Posterior cingulate gyrus (tissue), 11 donors: ENCODE measurements at regions of chr7 and their contacts with region 1.

Region 1: DNA sequence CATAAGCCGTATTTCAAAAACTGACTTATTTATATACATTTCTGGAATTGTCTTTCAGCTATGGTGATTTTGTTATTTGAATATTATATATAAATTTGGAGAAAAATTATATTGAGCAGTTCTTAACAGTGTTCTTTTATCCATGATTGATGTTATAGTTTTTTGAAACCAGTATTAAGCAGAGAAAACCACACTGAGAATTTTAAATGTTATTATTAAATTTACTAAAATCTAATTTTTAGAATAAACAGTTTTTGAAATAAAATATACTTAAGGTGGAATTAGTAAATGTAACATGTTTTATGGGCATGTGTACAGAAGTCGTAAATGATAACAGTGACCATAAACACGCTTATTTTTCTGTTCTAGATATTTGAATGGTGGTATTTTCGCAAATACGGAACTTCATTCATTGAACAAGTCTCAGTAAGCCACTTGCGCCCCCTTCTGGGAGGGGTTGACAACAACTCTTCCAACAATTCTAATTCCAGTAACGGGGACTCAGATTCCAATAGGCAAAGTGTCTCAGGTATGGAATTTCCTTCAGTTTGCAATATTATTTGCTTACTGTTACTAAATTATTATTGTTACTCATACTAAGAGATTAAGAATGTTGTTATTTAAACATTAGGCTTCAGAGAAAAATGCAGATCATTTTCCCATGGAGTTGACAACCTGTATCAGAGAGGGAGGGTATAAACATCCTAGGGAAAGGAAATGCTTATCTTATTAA is 166.1 kb downstream of the ST7 start:
- DNase-seq: peak in 9 of 10 donors; percentile 26 to 94 (median 76)

Region 2: GRCh38 chr7:116461500-116461899 is 657.9 kb before region 1 on chr7:
- intact Hi-C with region 1: no loop called
- DNase-seq: no peak

Region 3: DNA sequence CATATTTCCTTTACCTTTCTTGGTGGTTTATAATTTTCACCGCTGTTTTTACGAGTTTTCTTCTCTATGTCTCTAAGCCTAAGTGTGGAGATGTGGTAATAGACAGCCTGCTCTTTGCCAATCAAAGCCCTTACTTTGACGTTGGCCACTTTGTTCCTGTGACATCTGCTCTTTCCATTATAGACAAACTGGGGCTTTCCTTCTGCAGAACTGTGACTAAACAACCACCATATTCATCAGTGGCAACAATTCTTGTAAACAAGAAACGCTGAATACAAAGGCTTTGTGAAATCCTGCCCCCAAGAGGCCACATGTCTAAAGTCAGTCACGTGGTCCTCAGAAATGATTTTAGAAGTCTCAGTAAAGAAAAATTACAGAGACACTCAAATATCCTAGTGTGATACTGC is 316.6 kb before region 1 on chr7:
- intact Hi-C with region 1: no loop called
- DNase-seq: peak in 3 of 10 donors; percentile 17 to 47 (median 47)

Region 4: DNA sequence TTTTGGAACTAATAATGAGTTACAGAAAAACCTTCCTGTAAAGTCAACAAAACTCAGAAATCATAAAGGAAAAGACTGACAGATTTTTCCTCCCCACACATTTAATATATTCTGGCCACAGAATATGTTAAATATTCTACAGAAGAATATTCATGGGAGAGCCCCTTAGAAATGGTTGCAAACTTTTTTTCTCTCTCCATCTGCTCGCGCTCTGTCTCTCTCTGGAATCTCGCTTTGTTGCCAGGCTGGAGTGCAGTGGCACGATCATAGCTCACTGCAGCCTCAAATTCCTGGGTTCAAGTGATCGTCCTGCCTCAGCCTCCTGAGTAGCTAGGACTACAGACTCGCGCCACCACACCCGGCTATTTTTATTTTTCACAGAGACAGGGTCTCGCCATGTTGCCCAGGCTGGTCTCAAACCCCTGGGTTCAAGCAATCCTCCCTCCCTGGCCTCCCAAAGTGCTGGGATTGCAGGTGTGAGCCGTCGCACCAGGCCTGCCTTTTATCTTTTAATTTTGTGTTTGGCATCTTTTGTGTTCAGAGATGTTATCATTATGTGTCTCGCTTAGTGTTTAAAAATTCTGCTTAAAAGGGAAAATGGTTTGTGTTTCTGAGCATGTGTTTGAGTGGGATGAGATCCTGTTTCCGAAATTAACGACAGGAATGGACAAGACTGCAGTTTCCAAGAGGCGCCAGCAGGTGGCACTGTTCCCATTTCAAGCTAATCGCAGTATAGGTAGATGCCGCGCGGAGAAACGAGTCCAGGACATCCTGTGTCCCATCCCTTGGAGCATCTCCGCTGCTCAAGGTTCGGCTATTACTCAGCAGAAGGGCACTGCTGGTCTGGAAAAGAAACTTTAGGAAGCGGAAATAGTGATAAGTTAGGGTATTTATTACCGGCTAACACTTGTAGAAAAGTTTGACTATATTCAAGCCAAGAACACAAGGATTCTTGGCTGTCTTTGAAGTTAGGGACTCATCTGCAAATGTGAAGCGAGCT is 189.1 kb before region 1 on chr7:
- intact Hi-C with region 1: loop called (anchors 1 kb)
- DNase-seq: peak; percentile 77 to 97 (median 90)

Region 5: DNA sequence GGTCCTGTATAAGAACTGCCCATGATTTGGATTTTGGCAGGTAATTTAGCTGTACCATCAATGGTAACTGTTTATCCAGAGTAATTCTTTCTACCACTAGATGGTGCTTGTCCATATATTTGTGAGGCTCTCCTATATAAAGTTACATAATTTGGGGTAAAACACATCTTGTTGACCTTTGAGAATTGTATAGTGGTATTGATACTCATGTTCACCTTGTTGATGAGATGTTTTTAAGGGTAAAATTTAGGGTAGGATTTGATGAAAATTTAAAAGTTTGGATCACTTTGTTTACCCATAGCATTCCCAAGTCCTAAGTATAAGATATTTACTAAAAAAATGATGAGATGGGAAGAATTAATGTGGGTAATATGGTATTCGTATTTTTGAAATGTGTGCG is 134.4 kb before region 1 on chr7:
- intact Hi-C with region 1: loop called (anchors 2 kb)
- DNase-seq: no peak